Endothelial cell of umbilical vein (primary cell): ENCODE measurements at regions of chr5 and their contacts with region 1.

Region 1: GRCh38 chr5:142012792-142013388 is at the start of gene GNPDA1:
- DNase-seq: peak; percentile 67
- H3K4me3 ChIP-seq: peak within 1 kb of the TSS; percentile 51 to 80 (median 69)
- H3K27ac ChIP-seq: peak within 1 kb of the TSS; percentile 83
- H3K4me1 ChIP-seq: peaks cover 45% of the 10 kb centered on the region
- H3K27me3 ChIP-seq: no peaks in the 10 kb centered on the region
- CTCF ChIP-seq: peak in 1 of 2 donors; percentile 9
- POLR2A ChIP-seq: peak; percentile 88
- total RNA-seq, gene GNPDA1: 49.3 and 52.1 TPM in 2 replicates

Region 2: DNA sequence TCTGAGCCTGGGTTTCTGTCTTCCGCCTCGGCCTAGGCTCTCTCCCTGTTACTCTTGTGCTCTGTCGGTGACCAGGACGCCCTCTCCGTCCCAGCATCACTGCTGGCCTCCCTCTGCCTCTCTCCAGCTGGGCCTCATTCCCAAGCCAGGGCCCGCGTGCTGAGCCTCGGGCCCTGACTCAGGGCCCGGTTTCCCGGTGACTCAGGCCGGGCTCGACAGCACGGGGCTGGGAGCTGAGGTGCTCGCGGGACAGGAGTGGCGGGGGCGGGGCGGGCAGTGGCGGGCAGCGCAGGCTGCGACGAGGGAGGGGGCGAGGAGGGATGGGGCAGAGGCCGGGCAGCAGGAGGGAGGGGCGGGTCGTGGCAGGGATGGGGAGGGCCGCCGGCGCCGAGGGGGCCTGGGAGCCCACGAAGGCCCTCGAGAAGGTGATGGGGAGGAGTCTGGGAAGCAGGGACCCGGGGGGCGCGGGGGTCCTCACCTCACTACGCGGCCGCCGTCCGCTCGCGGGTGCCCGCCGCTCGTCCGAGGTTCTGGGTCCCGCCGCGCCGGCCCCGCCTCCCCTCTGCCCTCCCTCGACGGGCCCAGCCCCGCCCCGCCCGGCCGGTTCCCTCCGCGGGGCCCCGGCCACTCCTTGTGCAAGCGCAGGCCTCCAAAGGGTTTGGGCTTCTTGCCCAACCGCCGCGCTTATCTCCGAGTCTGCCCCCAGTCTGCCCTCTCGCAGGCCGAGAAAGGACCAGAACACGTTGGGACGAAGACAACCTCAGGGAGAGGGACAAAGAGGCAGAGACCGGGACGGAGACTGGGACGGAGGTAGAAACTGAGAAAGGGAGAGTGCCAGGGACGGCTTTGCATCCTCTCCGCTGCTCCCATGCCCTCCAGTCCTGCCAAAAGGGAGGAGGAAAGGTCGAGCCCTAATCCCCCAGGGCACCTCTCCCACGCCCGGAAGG is 330.9 kb before region 1 on chr5 and contains the start of gene ARAP3:
- CTCF ChIA-PET with region 1: no interaction called
- POLR2A ChIA-PET with region 1: no interaction called
- dilution Hi-C with region 1: no loop called
- intact Hi-C with region 1: loop called (anchors 5 kb)
- DNase-seq: peak; percentile 92
- H3K4me3 ChIP-seq: peak within 1 kb of the TSS; percentile 5 to 69 (median 45)
- H3K27ac ChIP-seq: peak within 1 kb of the TSS; percentile 100
- H3K4me1 ChIP-seq: peaks cover 62% of the 10 kb centered on the region
- H3K27me3 ChIP-seq: no peaks in the 10 kb centered on the region
- CTCF ChIP-seq: no peak
- POLR2A ChIP-seq: peak; percentile 56
- total RNA-seq, gene ARAP3: 136 and 142 TPM in 2 replicates

Region 3: DNA sequence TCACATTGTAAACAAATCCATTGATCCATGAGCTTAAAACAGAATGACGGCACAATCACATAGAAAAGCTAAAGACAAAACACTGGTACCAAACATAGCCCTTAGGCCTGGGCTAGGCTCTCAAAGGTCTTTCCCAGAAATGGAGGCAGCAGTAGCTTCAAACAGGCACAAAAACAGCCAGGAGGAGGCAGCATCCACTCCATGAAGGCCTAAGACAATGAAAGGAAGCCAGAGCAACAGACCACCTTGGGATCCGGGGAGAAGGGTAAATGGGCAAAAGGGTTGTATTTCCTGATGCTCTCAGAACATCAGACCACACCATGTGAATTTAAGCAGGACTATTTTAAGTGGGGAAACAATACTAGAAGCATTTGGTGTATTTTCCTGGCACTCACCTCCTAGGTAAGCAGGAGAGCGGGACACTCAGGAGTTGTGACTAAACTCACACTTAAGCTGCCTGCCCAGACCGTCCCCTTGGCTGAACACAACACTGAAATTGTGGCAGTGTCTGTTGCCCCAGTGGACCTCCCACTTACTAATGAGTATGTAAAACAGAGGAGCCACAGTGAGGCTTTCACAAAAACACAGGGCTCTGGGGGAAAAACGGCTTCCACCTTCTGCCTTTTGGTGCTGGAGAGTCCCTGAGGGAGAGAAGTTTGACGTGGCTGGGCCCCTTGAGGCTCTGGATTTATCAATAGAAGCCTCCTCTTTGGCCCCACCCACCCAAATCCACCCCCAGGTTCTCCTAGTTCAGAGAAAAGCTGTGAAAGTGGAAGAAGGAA is 12.0 kb before region 1 on chr5:
- CTCF ChIA-PET with region 1: interaction called, 21 read pairs
- POLR2A ChIA-PET with region 1: interaction called, 7 read pairs
- dilution Hi-C with region 1: no loop called
- intact Hi-C with region 1: loop called (anchors 1 kb)
- DNase-seq: peak; percentile 42
- H3K4me3 ChIP-seq: no peak overlapping the region
- H3K27ac ChIP-seq: no peak overlapping the region
- H3K4me1 ChIP-seq: peaks cover 3% of the 10 kb centered on the region
- H3K27me3 ChIP-seq: no peaks in the 10 kb centered on the region
- CTCF ChIP-seq: peak; percentile 47 to 55
- POLR2A ChIP-seq: no peak

Region 4: GRCh38 chr5:142053426-142054151 is 40.7 kb after region 1 on chr5:
- CTCF ChIA-PET with region 1: interaction called, 6 read pairs
- POLR2A ChIA-PET with region 1: interaction called, 11 read pairs
- dilution Hi-C with region 1: no loop called
- intact Hi-C with region 1: loop called (anchors 2 kb)
- DNase-seq: peak; percentile 33
- H3K4me3 ChIP-seq: no peak overlapping the region
- H3K27ac ChIP-seq: no peak overlapping the region
- H3K4me1 ChIP-seq: peaks cover 10% of the 10 kb centered on the region
- H3K27me3 ChIP-seq: peaks cover 1 to 2% of the 10 kb centered on the region in 2 experiments
- CTCF ChIP-seq: no peak
- POLR2A ChIP-seq: no peak

Region 5: GRCh38 chr5:142145106-142145900 is 132.4 kb after region 1 on chr5:
- CTCF ChIA-PET with region 1: interaction called, 122 read pairs
- POLR2A ChIA-PET with region 1: interaction called, 4 read pairs
- dilution Hi-C with region 1: no loop called
- intact Hi-C with region 1: loop called (anchors 1 kb)
- DNase-seq: peak; percentile 71
- H3K4me3 ChIP-seq: no peak overlapping the region
- H3K27ac ChIP-seq: no peak overlapping the region
- H3K4me1 ChIP-seq: no peaks in the 10 kb centered on the region
- H3K27me3 ChIP-seq: no peaks in the 10 kb centered on the region
- CTCF ChIP-seq: peak; percentile 71 to 74
- POLR2A ChIP-seq: no peak

Region 6: GRCh38 chr5:142356716-142357473 is 344.0 kb after region 1 on chr5:
- CTCF ChIA-PET with region 1: no interaction called
- POLR2A ChIA-PET with region 1: no interaction called
- dilution Hi-C with region 1: no loop called
- intact Hi-C with region 1: loop called (anchors 10 kb)
- DNase-seq: peak; percentile 94
- H3K4me3 ChIP-seq: peak overlapping the region in 1 of 3 experiments; percentile 54
- H3K27ac ChIP-seq: peak overlapping the region; percentile 74
- H3K4me1 ChIP-seq: peaks cover 31% of the 10 kb centered on the region
- H3K27me3 ChIP-seq: no peaks in the 10 kb centered on the region
- CTCF ChIP-seq: no peak
- POLR2A ChIP-seq: peak; percentile 47